Activated naive CD4-positive, alpha-beta T cell treated with anti-CD3 and anti-CD28 coated beads for 36 hours (primary cell): ENCODE measurements at regions of chr6 and their contacts with region 1.

Region 1: GRCh38 chr6:27825025-27825793 is 87.0 kb downstream of the OR2B2 start:
- DNase-seq: no peak
- H3K4me3 Mint-ChIP-seq: peak overlapping the region; percentile 89
- H3K27ac Mint-ChIP-seq: peak overlapping the region; percentile 98
- H3K4me1 Mint-ChIP-seq: peaks cover 24% of the 10 kb centered on the region
- H3K27me3 Mint-ChIP-seq: no peaks in the 10 kb centered on the region

Region 2: GRCh38 chr6:27871924-27872638 is 46.9 kb after region 1 on chr6:
- CTCF ChIA-PET with region 1: interaction called, 10 read pairs
- intact Hi-C with region 1: loop called (anchors 2 kb)
- DNase-seq: peak; percentile 81
- H3K4me3 Mint-ChIP-seq: peak overlapping the region; percentile 91
- H3K27ac Mint-ChIP-seq: peak overlapping the region; percentile 97
- H3K4me1 Mint-ChIP-seq: peaks cover 34% of the 10 kb centered on the region
- H3K27me3 Mint-ChIP-seq: peaks cover 8% of the 10 kb centered on the region

Region 3: DNA sequence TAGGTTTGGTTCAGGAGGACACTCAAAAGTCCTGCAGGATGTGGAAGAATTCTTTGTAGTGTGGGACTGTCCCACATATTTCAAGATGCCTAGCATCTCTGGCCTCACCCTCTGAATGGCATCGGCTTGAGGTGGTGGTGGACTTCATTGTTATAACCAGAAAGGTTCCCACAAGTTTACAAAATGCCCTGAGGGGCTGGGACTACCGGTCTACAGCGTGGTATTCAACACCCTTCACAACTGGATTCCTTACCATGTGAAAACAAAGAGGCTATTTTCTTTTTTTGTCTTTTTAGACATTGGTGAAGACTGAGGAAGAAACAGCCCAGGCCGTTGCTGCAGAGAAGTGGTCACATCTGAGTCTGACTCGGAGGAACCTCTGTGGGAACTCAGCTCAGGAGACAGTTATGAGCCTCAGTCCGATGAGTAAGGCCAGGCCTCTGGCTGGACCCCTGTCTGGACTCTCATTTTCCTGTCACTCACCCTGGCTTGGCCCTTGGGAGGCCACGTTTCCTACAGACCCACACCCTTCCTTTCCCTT is 471.4 kb after region 1 on chr6:
- CTCF ChIA-PET with region 1: no interaction called
- intact Hi-C with region 1: no loop called
- DNase-seq: no peak
- H3K4me3 Mint-ChIP-seq: no peak overlapping the region
- H3K27ac Mint-ChIP-seq: no peak overlapping the region
- H3K4me1 Mint-ChIP-seq: no peaks in the 10 kb centered on the region
- H3K27me3 Mint-ChIP-seq: no peaks in the 10 kb centered on the region